GM12878 (cell line): ENCODE measurements at regions of chr2 and their contacts with region 1.

Region 1: GRCh38 chr2:112636231-112636960 is 9.3 kb upstream of the SLC20A1 start:
- DNase-seq: no peak
- ATAC-seq: peak; percentile 94
- H3K4me3 ChIP-seq: no peak overlapping the region
- H3K27ac ChIP-seq: no peak overlapping the region
- H3K4me1 ChIP-seq: peaks cover 32% of the 10 kb centered on the region
- H3K27me3 ChIP-seq: peaks cover 0 to 2% of the 10 kb centered on the region in 2 experiments; a peak in 2 of 4 replicates
- CTCF ChIP-seq: no peak
- EP300 ChIP-seq: peak; percentile 72 to 86; a peak in 3 of 4 replicates
- POLR2A ChIP-seq: no peak
- RAD21 ChIP-seq: no peak

Region 2: DNA sequence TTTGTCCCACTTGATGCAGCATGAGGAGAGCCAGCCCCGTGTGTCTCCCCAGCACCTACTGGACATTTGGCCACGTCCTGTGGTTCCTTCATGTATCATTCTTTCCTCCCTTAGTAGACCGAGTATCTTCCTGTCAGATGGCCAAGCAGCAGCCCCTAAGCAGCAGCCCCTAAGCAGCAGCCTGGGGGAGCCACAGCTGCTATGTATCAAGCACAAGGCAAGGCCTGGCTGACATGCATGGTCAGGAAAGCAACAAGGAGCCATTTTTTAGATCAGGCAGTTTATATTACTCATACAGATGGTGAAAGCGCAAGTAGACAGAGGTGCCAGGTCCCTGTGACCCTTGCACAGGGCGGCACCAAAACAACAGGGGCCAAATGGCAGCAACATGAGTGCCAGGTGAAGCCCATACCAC is 29.9 kb before region 1 on chr2:
- CTCF ChIA-PET with region 1: interaction called, 15 read pairs
- POLR2A ChIA-PET with region 1: no interaction called
- RAD21 ChIA-PET with region 1: no interaction called
- SMC1A ChIA-PET with region 1: no interaction called
- in situ Hi-C with region 1: no loop called
- intact Hi-C with region 1: no loop called
- DNase-seq: no peak
- ATAC-seq: peak; percentile 20; the same call in 1 of the 3 replicates
- H3K4me3 ChIP-seq: no peak overlapping the region
- H3K27ac ChIP-seq: no peak overlapping the region
- H3K4me1 ChIP-seq: no peaks in the 10 kb centered on the region
- H3K27me3 ChIP-seq: no peaks in the 10 kb centered on the region
- CTCF ChIP-seq: no peak
- EP300 ChIP-seq: no peak
- POLR2A ChIP-seq: no peak
- RAD21 ChIP-seq: no peak

Region 3: GRCh38 chr2:112701052-112701451 is 64.7 kb after region 1 on chr2:
- CTCF ChIA-PET with region 1: interaction called, 16 read pairs
- POLR2A ChIA-PET with region 1: interaction called, 13 read pairs
- RAD21 ChIA-PET with region 1: interaction called, 51 read pairs
- SMC1A ChIA-PET with region 1: interaction called, 100 read pairs
- in situ Hi-C with region 1: no loop called
- intact Hi-C with region 1: no loop called
- DNase-seq: no peak
- ATAC-seq: peak; percentile 25; the same call in 2 of the 3 replicates
- H3K4me3 ChIP-seq: no peak overlapping the region
- H3K27ac ChIP-seq: peak overlapping the region; percentile 63
- H3K4me1 ChIP-seq: peaks cover 36% of the 10 kb centered on the region
- H3K27me3 ChIP-seq: no peaks in the 10 kb centered on the region
- CTCF ChIP-seq: no peak
- EP300 ChIP-seq: no peak
- POLR2A ChIP-seq: no peak
- RAD21 ChIP-seq: no peak